Stomach (tissue), 19 donors: ENCODE measurements at regions of chr11 and their contacts with region 1.

Region 1: DNA sequence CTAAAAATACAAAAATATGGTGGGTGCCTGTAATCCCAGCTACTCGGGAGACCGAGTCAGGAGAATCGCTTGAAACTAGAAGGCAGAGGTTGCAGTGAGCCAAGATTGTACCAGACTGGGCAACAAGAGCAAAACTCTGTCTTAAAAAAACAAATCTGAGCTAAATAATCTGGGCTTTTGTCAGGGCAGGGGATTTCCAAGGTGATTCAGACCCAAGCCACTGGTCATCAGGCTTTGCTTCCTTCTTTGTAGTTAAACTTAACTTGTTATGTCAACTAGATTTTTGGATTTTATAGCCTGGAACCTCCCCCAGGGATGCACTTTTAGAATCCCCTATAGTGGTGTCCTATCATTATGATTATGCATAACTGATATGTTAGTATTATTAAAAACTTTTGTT is 27.0 kb upstream of the SLC22A8 start:
- DNase-seq: no peak
- H3K4me3 ChIP-seq: no peak overlapping the region
- H3K27ac ChIP-seq: no peak overlapping the region
- H3K4me1 ChIP-seq: no peaks in the 10 kb centered on the region
- H3K27me3 ChIP-seq: no peaks in the 10 kb centered on the region
- CTCF ChIP-seq: no peak
- EP300 ChIP-seq: no peak
- POLR2A ChIP-seq: no peak

Region 2: GRCh38 chr11:62652161-62653006 is 390.2 kb before region 1 on chr11:
- intact Hi-C with region 1: no loop called
- DNase-seq: no peak
- H3K4me3 ChIP-seq: peak overlapping the region; percentile 67 to 93 (median 82)
- H3K27ac ChIP-seq: peak overlapping the region; percentile 87 to 96 (median 92)
- H3K4me1 ChIP-seq: peaks cover 15 to 33% (median 27%) of the 10 kb centered on the region in 4 donors
- H3K27me3 ChIP-seq: no peaks in the 10 kb centered on the region
- CTCF ChIP-seq: no peak
- EP300 ChIP-seq: no peak
- POLR2A ChIP-seq: no peak

Region 3: GRCh38 chr11:63212742-63213141 is 170.1 kb after region 1 on chr11:
- intact Hi-C with region 1: loop called (anchors 10 kb)
- DNase-seq: peak in 1 of 2 donors; percentile 38
- H3K4me3 ChIP-seq: no peak overlapping the region
- H3K27ac ChIP-seq: no peak overlapping the region
- H3K4me1 ChIP-seq: no peaks in the 10 kb centered on the region
- H3K27me3 ChIP-seq: no peaks in the 10 kb centered on the region
- CTCF ChIP-seq: peak in 3 of 7 experiments; percentile 25 to 38 (median 37)
- EP300 ChIP-seq: no peak
- POLR2A ChIP-seq: no peak